ENCODE measurements at regions of chr19 and their contacts with region 1.

Region 1: DNA sequence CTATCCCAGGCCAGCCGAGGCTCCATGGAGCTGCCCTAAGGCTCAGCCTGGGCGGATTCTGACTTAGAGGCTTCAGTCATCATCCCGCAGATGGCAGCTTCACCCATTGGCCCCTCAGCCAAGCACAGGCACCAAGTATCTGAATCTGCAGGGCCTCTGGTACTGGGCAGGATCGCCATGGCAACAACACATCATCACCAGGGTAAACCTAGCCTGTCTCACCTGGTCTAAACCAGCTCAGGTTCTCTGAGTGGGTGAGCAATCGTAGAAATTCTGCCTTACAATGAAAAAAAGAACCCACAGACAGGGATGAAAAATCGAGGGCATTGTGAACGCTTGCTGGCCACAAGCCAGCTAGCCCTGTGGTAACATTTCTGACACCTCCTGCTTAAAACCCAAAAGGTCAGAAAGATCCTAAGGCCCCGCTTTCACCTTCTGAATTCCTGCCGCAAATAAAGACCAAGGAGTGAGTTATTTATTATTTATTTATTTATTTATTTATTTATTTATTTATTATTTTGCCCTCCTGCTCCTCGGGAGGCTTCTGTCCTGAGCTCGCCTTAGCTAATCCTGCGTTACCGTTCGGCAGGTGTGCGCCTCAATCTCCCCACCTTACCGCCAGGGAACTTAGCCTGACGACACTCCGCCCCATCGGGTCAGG is 12.0 kb upstream of the CEACAM21 start:
- DNase-seq: peak; percentile 71
- ATAC-seq: peak; percentile 51
- H3K4me3 ChIP-seq: peak overlapping the region in 4 of 5 experiments; percentile 44 to 57 (median 52)
- H3K4me3 Mint-ChIP-seq: peak overlapping the region; percentile 90
- H3K27ac ChIP-seq: peak overlapping the region in 1 of 2 donors; percentile 39
- H3K27ac Mint-ChIP-seq: peak overlapping the region; percentile 72
- H3K4me1 ChIP-seq: peaks cover 30 to 33% of the 10 kb centered on the region in 2 donors
- H3K4me1 Mint-ChIP-seq: peaks cover 48% of the 10 kb centered on the region
- H3K27me3 ChIP-seq: peaks cover 0 to 12% (median 5%) of the 10 kb centered on the region in 4 experiments
- H3K27me3 Mint-ChIP-seq: peaks cover 7% of the 10 kb centered on the region
- CTCF ChIP-seq: no peak

Region 2: DNA sequence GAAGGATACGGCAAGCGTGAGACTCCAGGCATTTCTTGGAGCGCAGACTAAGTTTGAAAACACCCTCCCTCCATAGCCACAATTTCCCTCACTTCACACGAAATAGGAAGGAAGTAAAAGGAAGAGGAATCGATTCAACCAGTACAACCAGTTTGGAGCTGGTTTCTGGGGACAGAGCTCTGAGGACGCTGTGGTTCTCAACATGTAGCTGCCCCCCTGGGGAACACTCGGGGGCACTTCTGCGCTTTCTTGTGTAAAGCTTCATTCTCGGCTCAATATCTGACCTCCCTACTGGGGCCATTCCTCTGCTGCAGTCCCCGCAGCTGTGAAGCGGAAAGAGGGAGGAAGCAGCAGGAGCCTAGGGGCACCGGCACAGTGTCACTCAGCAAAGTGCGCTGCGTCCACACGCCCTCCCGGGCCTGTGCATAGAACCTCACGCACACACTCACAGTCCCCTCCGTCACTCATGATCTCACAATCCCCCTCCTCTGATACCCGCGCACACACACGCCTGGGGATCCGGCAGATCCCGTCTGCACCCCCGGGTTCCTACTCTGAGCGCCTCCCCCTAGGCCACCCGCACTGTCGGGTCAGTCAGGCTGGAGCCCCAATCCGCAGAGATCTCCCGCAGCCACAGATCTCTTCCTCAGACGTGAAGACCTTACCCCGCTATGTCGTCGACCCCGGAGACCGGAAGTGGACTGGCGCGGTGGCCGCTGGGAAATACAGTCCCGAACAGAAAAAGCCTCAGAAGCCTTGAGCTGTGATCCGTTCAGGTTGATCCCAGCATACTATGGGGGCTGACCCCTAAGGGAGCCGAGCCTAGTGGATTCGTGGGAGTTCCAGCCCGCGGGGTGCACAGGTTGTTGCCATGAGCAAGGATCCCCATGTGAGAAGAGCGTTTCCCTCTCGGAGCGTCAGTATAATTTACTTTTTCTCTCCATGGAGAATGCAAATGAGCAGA is 1473.5 kb before region 1 on chr19 and contains the start of gene ZNF780A:
- CTCF ChIA-PET with region 1: no interaction called
- POLR2A ChIA-PET with region 1: no interaction called
- intact Hi-C with region 1: no loop called
- DNase-seq: peak; percentile 75
- ATAC-seq: peak; percentile 88
- H3K4me3 ChIP-seq: peak within 1 kb of the TSS; percentile 85 to 94 (median 88)
- H3K4me3 Mint-ChIP-seq: peak within 1 kb of the TSS; percentile 99
- H3K27ac ChIP-seq: peak within 1 kb of the TSS; percentile 79 to 86
- H3K27ac Mint-ChIP-seq: peak within 1 kb of the TSS; percentile 99
- H3K4me1 ChIP-seq: peaks cover 12 to 16% of the 10 kb centered on the region in 2 donors
- H3K4me1 Mint-ChIP-seq: peaks cover 37% of the 10 kb centered on the region
- H3K27me3 ChIP-seq: peaks cover 0 to 7% (median 4%) of the 10 kb centered on the region in 4 experiments
- H3K27me3 Mint-ChIP-seq: peaks cover 21% of the 10 kb centered on the region
- CTCF ChIP-seq: no peak
- total RNA-seq, gene ZNF780A: 32.3 and 32.8 TPM in 2 replicates

Region 3: GRCh38 chr19:41439441-41440222 is 124.4 kb before region 1 on chr19 and contains the start of gene DMAC2:
- CTCF ChIA-PET with region 1: interaction called, 442 read pairs
- POLR2A ChIA-PET with region 1: interaction called, 5 read pairs
- intact Hi-C with region 1: no loop called
- DNase-seq: peak; percentile 94
- ATAC-seq: peak; percentile 98
- H3K4me3 ChIP-seq: peak within 1 kb of the TSS; percentile 61 to 97 (median 81)
- H3K4me3 Mint-ChIP-seq: peak within 1 kb of the TSS; percentile 45
- H3K27ac ChIP-seq: peak within 1 kb of the TSS; percentile 51 to 80
- H3K27ac Mint-ChIP-seq: peak within 1 kb of the TSS; percentile 50
- H3K4me1 ChIP-seq: peaks cover 8 to 14% of the 10 kb centered on the region in 2 donors
- H3K4me1 Mint-ChIP-seq: peaks cover 15% of the 10 kb centered on the region
- H3K27me3 ChIP-seq: peaks cover 0 to 4% (median 0%) of the 10 kb centered on the region in 4 experiments
- H3K27me3 Mint-ChIP-seq: peaks cover 13% of the 10 kb centered on the region
- CTCF ChIP-seq: peak; percentile 41
- total RNA-seq, gene DMAC2: 31.6 and 31.8 TPM in 2 replicates

Region 4: GRCh38 chr19:41457241-41457640 is 106.7 kb before region 1 on chr19:
- CTCF ChIA-PET with region 1: interaction called, 442 read pairs
- POLR2A ChIA-PET with region 1: interaction called, 3 read pairs
- intact Hi-C with region 1: no loop called
- DNase-seq: no peak
- ATAC-seq: peak; percentile 41
- H3K4me3 ChIP-seq: no peak overlapping the region
- H3K4me3 Mint-ChIP-seq: no peak overlapping the region
- H3K27ac ChIP-seq: no peak overlapping the region
- H3K27ac Mint-ChIP-seq: no peak overlapping the region
- H3K4me1 ChIP-seq: peaks cover 8 to 12% of the 10 kb centered on the region in 2 donors
- H3K4me1 Mint-ChIP-seq: peaks cover 30% of the 10 kb centered on the region
- H3K27me3 ChIP-seq: no peaks in the 10 kb centered on the region
- H3K27me3 Mint-ChIP-seq: peaks cover 6% of the 10 kb centered on the region
- CTCF ChIP-seq: no peak

Region 5: DNA sequence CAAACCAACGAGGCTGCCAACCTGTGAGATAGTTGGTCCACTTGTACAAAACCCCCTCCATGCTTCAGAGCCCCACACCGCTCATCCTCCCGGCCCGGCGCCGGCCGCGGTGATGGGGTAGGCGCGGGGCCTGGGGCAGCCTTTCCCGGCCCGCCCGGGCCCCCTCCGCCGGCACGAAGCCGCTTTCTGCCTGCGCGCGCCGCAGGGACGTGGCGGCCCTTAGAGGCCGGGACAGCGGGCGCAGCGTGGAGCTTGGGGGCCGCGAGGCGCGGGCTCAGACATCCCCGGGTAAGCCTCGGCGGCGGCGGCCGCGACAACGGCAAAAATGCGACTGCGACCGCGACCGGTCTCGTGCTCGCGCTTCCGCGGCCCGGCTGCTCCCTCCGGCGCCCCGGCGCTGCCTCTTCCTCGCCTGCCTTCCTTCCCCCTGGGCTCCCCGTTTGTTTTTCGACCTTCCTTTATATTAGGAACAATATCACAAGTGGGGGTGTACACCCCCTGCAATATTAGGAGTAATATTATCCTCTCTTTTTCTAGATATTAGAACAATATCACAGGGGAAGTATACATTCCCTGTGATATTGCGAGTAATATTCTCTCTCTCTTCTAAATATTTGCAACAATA is 41.9 kb before region 1 on chr19:
- CTCF ChIA-PET with region 1: interaction called, 10 read pairs
- POLR2A ChIA-PET with region 1: interaction called, 5 read pairs
- intact Hi-C with region 1: loop called (anchors 1 kb)
- DNase-seq: peak; percentile 75
- ATAC-seq: peak; percentile 55
- H3K4me3 ChIP-seq: peak overlapping the region; percentile 36 to 57 (median 45)
- H3K4me3 Mint-ChIP-seq: peak overlapping the region; percentile 89
- H3K27ac ChIP-seq: peak overlapping the region; percentile 87 to 88
- H3K27ac Mint-ChIP-seq: peak overlapping the region; percentile 98
- H3K4me1 ChIP-seq: peaks cover 22 to 27% of the 10 kb centered on the region in 2 donors
- H3K4me1 Mint-ChIP-seq: peaks cover 38% of the 10 kb centered on the region
- H3K27me3 ChIP-seq: no peaks in the 10 kb centered on the region
- H3K27me3 Mint-ChIP-seq: no peaks in the 10 kb centered on the region
- CTCF ChIP-seq: no peak

Region 6: GRCh38 chr19:41541990-41542584 is 21.9 kb before region 1 on chr19:
- CTCF ChIA-PET with region 1: interaction called, 549 read pairs
- POLR2A ChIA-PET with region 1: interaction called, 17 read pairs
- intact Hi-C with region 1: loop called (anchors 1 kb)
- DNase-seq: peak; percentile 84
- ATAC-seq: peak; percentile 28
- H3K4me3 ChIP-seq: peak overlapping the region in 1 of 5 experiments; percentile 11
- H3K4me3 Mint-ChIP-seq: peak overlapping the region; percentile 66
- H3K27ac ChIP-seq: no peak overlapping the region
- H3K27ac Mint-ChIP-seq: peak overlapping the region; percentile 54
- H3K4me1 ChIP-seq: peaks cover 43 to 45% of the 10 kb centered on the region in 2 donors
- H3K4me1 Mint-ChIP-seq: peaks cover 55% of the 10 kb centered on the region
- H3K27me3 ChIP-seq: no peaks in the 10 kb centered on the region
- H3K27me3 Mint-ChIP-seq: no peaks in the 10 kb centered on the region
- CTCF ChIP-seq: peak; percentile 88

Region 7: GRCh38 chr19:41575998-41576397 is 12.0 kb after region 1 on chr19 and contains the start of gene CEACAM21:
- CTCF ChIA-PET with region 1: interaction called, 25 read pairs
- POLR2A ChIA-PET with region 1: no interaction called
- intact Hi-C with region 1: no loop called
- DNase-seq: peak; percentile 80
- ATAC-seq: peak; percentile 100
- H3K4me3 ChIP-seq: peak within 1 kb of the TSS; percentile 41 to 85 (median 59)
- H3K4me3 Mint-ChIP-seq: peak within 1 kb of the TSS; percentile 82
- H3K27ac ChIP-seq: peak within 1 kb of the TSS; percentile 68 to 84
- H3K27ac Mint-ChIP-seq: peak within 1 kb of the TSS; percentile 95
- H3K4me1 ChIP-seq: peaks cover 18 to 20% of the 10 kb centered on the region in 2 donors
- H3K4me1 Mint-ChIP-seq: peaks cover 25% of the 10 kb centered on the region
- H3K27me3 ChIP-seq: no peaks in the 10 kb centered on the region
- H3K27me3 Mint-ChIP-seq: no peaks in the 10 kb centered on the region
- CTCF ChIP-seq: no peak
- total RNA-seq, gene CEACAM21: 18.9 and 19.3 TPM in 2 replicates

Region 8: DNA sequence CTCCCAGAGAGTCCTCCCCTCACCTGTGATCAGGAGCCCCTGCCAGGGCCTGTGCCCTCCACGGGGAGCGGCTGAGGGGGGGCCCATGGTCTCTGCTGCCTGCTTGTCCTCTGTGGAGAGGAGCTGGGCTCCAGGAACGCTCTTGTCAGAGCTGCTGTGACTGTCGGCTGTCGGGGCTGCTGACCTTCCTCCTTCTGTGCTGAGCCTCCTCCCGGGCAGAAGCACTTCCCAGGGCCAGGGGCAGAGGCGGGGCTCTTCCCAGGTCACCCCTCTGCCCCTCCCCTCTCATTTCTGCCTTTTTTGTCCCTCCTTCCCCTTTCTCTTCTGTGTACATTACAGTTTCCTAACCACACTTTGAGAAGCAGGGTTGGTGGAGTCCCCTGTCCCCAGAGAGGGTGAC is 62.9 kb after region 1 on chr19 and contains the start of gene CEACAM4:
- CTCF ChIA-PET with region 1: no interaction called
- POLR2A ChIA-PET with region 1: no interaction called
- intact Hi-C with region 1: no loop called
- DNase-seq: no peak
- ATAC-seq: no peak
- H3K4me3 ChIP-seq: peak within 1 kb of the TSS in 1 of 5 experiments; percentile 61
- H3K4me3 Mint-ChIP-seq: no peak within 1 kb of the TSS
- H3K27ac ChIP-seq: no peak within 1 kb of the TSS
- H3K27ac Mint-ChIP-seq: no peak within 1 kb of the TSS
- H3K4me1 ChIP-seq: no peaks in the 10 kb centered on the region
- H3K4me1 Mint-ChIP-seq: no peaks in the 10 kb centered on the region
- H3K27me3 ChIP-seq: peaks cover 0 to 18% (median 7%) of the 10 kb centered on the region in 4 experiments
- H3K27me3 Mint-ChIP-seq: peaks cover 26% of the 10 kb centered on the region
- CTCF ChIP-seq: no peak
- total RNA-seq, gene CEACAM4: not detected in 2 replicates

Region 9: DNA sequence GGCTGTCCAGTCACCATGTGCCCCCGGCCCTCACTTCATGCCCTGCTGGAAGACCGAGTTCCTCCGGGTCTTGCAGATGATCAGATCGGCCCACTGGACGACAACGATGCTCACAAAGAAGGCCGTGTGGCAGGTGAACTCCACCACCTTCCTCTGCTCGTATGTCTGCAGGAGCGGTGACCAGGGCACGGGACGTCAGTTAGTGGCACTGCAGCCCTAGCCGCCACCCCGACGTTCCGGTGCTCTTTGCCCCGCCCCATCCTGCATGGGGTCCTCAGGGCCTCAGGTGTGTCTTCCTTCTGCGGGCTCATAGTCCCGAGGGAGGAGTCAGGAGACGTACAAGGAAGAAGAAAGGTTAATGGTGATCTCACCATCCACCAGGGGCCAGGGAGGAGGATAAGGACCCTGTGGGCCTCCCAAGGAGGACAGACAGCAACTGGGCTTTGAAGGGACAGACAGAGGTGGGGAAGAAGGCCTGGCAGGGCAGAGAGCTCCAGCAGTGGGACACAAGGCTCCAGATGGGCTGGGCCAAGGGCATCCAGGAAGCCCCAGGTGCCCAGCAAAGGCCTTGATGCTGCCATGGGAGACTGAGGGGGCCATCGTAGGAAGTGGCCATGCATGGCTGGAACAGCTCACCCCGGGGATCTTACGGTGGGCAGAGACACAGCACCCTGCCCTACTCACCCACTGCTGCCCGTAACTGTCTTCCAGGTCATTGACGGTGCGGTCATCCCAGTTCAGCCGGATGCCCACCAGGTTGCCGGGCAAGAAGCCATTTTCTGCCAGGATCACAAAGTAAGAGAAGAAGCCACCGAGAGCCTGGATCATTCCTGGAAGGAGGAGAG is 405.0 kb after region 1 on chr19:
- CTCF ChIA-PET with region 1: no interaction called
- POLR2A ChIA-PET with region 1: no interaction called
- intact Hi-C with region 1: no loop called
- DNase-seq: no peak
- ATAC-seq: no peak
- H3K4me3 ChIP-seq: no peak overlapping the region
- H3K4me3 Mint-ChIP-seq: no peak overlapping the region
- H3K27ac ChIP-seq: no peak overlapping the region
- H3K27ac Mint-ChIP-seq: no peak overlapping the region
- H3K4me1 ChIP-seq: no peaks in the 10 kb centered on the region
- H3K4me1 Mint-ChIP-seq: no peaks in the 10 kb centered on the region
- H3K27me3 ChIP-seq: no peaks in the 10 kb centered on the region
- H3K27me3 Mint-ChIP-seq: peaks cover 6% of the 10 kb centered on the region
- CTCF ChIP-seq: no peak

Region 10: DNA sequence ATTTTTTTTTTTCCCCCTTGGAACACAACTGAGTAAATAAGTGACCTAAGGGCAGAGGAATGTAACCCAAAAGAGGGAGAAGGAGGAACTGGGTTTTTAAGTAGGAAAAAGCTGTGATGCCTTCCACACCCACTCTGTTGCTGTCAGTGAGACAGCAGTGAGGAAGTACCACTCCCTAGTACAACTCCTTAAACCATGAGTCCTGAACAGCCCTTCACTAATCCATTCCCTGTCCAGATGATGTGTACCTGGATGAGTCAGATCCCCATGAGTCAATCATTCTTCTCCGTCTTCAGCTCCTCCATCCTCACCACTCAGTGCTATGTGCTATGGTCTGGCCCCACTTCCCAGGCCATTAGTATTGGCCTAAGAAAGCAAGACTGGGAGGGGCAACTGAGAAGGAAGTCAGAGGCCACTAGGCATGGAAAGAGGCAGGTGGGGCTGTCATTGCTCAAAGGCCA is 891.7 kb after region 1 on chr19:
- CTCF ChIA-PET with region 1: no interaction called
- POLR2A ChIA-PET with region 1: no interaction called
- intact Hi-C with region 1: no loop called
- DNase-seq: no peak
- ATAC-seq: no peak
- H3K4me3 ChIP-seq: no peak overlapping the region
- H3K4me3 Mint-ChIP-seq: no peak overlapping the region
- H3K27ac ChIP-seq: no peak overlapping the region
- H3K27ac Mint-ChIP-seq: no peak overlapping the region
- H3K4me1 ChIP-seq: peaks cover 18 to 19% of the 10 kb centered on the region in 2 donors
- H3K4me1 Mint-ChIP-seq: peaks cover 20% of the 10 kb centered on the region
- H3K27me3 ChIP-seq: peaks cover 0 to 3% (median 0%) of the 10 kb centered on the region in 4 experiments
- H3K27me3 Mint-ChIP-seq: peaks cover 6% of the 10 kb centered on the region
- CTCF ChIP-seq: no peak

Measured in B cell (primary cell).